Activated CD8-positive, alpha-beta T cell treated with anti-CD3 and anti-CD28 coated beads, Interleukin-2, amount 10 ng/mL, durations not matched to agents 7 days and 5 days (primary cell): ENCODE measurements at regions of chr4 and their contacts with region 1.

Region 1: DNA sequence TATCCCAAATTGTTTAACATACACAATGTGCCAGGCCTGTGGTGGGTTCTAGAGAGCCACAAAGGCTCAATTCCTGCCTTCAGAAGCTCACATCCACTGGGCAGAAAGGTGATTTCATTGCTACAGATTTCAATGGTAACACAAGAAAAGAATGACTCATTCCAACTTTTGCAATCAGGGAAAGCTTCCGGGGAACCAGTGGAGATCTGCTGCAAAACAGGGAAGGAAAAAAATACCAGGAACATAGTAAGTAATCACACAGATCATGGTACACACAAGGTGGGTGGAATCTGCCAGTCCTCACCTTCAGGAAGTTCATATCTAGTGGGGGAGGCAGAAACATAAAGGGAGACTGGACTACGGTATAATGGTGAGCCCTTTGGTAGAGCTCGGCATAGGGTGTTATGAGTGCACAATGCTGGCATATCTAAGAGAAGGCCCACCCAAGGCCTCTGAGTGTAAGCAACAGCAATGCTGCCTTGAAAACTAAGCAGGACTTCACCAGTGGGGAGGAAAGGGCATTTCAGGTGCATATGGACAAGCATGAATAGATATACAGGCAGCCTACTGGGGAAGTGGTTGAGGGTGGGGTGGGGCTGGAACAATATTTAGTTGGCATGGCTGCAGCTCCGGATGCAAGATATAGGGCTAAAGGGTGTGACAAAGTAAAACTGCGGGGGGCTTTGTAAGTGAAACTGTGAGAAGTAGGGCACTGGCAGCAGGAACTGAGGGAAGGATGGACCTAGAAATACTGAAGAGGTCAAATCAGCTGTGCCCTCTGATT is 24.2 kb downstream of the GPRIN3 start:
- DNase-seq: peak; percentile 69
- ATAC-seq: peak; percentile 76
- H3K4me3 Mint-ChIP-seq: peak overlapping the region; percentile 50
- H3K27ac Mint-ChIP-seq: peak overlapping the region; percentile 78
- H3K4me1 Mint-ChIP-seq: peaks cover 59% of the 10 kb centered on the region
- H3K27me3 Mint-ChIP-seq: no peaks in the 10 kb centered on the region

Region 2: GRCh38 chr4:89216866-89217265 is 66.6 kb before region 1 on chr4:
- CTCF ChIA-PET with region 1: no interaction called
- POLR2A ChIA-PET with region 1: no interaction called
- DNase-seq: no peak
- ATAC-seq: no peak
- H3K4me3 Mint-ChIP-seq: no peak overlapping the region
- H3K27ac Mint-ChIP-seq: no peak overlapping the region
- H3K4me1 Mint-ChIP-seq: peaks cover under 1% of the 10 kb centered on the region
- H3K27me3 Mint-ChIP-seq: peaks cover 7% of the 10 kb centered on the region

Region 3: GRCh38 chr4:89307446-89308160 is 24.2 kb after region 1 on chr4 and contains the start of gene GPRIN3:
- CTCF ChIA-PET with region 1: interaction called, 11 read pairs
- POLR2A ChIA-PET with region 1: interaction called, 9 read pairs
- DNase-seq: peak; percentile 61
- ATAC-seq: peak; percentile 76
- H3K4me3 Mint-ChIP-seq: peak within 1 kb of the TSS; percentile 90
- H3K27ac Mint-ChIP-seq: peak within 1 kb of the TSS; percentile 84
- H3K4me1 Mint-ChIP-seq: peaks cover 52% of the 10 kb centered on the region
- H3K27me3 Mint-ChIP-seq: no peaks in the 10 kb centered on the region
- total RNA-seq, gene GPRIN3: 40.6 to 40.8 TPM